ENCODE measurements at regions of chr6 and their contacts with region 1.

Region 1: GRCh38 chr6:46690141-46690755 is 2.6 kb downstream of the TDRD6 start:
- DNase-seq: no peak
- H3K27ac ChIP-seq: no peak overlapping the region
- CTCF ChIP-seq: no peak

Region 2: DNA sequence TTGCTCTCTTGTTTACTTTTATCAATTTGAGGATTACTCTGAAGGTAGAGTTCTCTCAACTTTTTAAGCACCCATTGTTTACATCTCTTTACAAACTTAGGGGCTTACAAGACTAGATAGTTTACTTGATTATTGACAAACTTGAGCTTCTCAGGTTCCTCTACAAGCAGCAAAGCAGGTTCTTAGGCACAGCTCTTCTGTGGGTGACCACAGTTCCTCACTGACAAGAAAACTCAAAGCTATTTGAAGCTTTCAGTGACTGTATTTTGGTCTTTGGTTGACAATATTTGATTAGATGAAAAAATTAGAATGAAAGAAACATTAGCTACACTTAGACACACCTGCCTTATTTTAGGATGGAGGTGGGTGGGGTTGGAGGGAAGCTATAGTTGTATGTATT is 1689.4 kb before region 1 on chr6:
- CTCF ChIA-PET with region 1: interaction called, 11 read pairs
- POLR2A ChIA-PET with region 1: no interaction called
- DNase-seq: no peak
- H3K27ac ChIP-seq: no peak overlapping the region
- CTCF ChIP-seq: no peak

Region 3: GRCh38 chr6:46746696-46747095 is 56.4 kb after region 1 on chr6 and contains the start of gene ANKRD66:
- CTCF ChIA-PET with region 1: no interaction called
- POLR2A ChIA-PET with region 1: no interaction called
- DNase-seq: no peak
- H3K27ac ChIP-seq: no peak within 1 kb of the TSS
- CTCF ChIP-seq: no peak

Region 4: GRCh38 chr6:46838033-46838432 is 147.8 kb after region 1 on chr6:
- CTCF ChIA-PET with region 1: no interaction called
- POLR2A ChIA-PET with region 1: no interaction called
- DNase-seq: no peak
- H3K27ac ChIP-seq: no peak overlapping the region
- CTCF ChIP-seq: no peak

Measured in RWPE1 (cell line).